ENCODE measurements at regions of chr17 and their contacts with region 1.

Region 1: GRCh38 chr17:78313735-78314648 is 45.9 kb downstream of the SOCS3 start:
- DNase-seq: no peak
- H3K4me3 ChIP-seq: peak overlapping the region; percentile 43
- CTCF ChIP-seq: no peak

Region 2: DNA sequence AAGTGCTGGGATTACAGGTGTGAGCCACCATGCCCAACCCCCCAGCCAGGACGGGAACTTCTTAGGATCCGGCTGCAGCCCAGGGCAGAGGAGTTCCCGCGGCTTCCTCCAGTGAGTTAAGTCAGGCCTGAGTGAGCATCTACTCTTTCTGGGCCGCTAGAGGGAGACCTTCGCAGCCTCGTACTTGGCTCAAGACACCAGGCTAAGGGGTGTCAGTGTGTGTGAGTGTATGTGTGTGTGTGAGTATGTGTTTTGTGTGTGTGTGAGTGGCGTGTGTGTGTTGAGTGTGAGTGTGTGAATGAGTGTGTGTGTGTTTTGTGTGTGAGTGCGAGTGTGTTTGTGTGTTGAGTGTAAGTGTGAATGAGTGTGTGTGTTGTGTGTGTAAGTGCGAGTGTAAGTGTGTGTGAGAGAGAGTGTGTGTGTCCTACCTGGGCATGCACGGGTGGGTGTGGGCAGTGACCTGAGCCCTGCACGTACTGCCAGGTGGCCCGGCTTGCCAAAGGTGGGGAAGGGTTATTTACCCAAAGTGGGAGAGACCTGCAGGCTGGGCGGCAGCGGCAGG is 24.1 kb before region 1 on chr17:
- CTCF ChIA-PET with region 1: interaction called, 10 read pairs
- POLR2A ChIA-PET with region 1: no interaction called
- DNase-seq: peak; percentile 53
- H3K4me3 ChIP-seq: no peak overlapping the region
- CTCF ChIP-seq: peak; percentile 93

Measured in AG04449 (cell line).